Sciatic nerve (tissue), 2 donors: ENCODE measurements at regions of chr10 and their contacts with region 1.

Region 1: DNA sequence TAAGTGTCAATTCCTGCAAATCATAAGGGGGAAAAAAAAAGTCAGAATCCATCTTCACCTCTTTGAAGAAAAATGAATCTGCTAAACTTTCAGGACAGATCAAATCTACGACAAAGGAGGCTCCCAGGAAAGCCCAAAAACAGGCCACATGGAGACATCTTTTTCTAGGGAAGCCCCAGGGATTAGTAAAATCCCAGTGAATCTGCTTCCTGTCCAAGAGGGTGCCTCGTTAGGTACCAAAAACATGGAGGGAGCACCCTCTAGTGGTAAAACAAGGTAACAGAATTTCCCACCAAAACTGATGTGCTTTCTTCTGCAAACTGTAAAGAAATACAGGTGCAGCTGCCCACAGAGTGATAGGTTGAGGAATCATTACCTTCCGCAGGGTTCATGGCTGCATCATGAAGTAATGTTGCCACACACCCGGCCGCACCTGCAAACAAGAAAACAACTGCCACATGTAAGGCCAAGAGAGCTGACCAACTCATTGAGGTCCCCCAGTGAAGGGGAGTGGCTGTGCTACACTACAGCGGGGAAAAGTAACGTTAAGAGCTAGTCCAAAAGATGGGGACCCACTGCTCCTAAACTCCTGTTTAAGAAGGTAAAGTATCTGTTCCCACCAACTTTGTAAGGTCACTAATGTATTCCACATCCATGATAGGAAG is 7.9 kb downstream of the SLC25A28 start:
- DNase-seq: no peak
- ATAC-seq: peak; percentile 70

Region 2: GRCh38 chr10:99341860-99342490 is 270.3 kb before region 1 on chr10:
- intact Hi-C with region 1: no loop called
- DNase-seq: no peak
- ATAC-seq: no peak

Region 3: GRCh38 chr10:99430451-99431189 is 181.7 kb before region 1 on chr10 and contains the start of gene GOT1:
- intact Hi-C with region 1: loop called (anchors 5 kb)
- DNase-seq: peak; percentile 96
- ATAC-seq: peak; percentile 99
- total RNA-seq, gene GOT1: 12.2 TPM